BJ (cell line): ENCODE measurements at regions of chr1 and their contacts with region 1.

Region 1: DNA sequence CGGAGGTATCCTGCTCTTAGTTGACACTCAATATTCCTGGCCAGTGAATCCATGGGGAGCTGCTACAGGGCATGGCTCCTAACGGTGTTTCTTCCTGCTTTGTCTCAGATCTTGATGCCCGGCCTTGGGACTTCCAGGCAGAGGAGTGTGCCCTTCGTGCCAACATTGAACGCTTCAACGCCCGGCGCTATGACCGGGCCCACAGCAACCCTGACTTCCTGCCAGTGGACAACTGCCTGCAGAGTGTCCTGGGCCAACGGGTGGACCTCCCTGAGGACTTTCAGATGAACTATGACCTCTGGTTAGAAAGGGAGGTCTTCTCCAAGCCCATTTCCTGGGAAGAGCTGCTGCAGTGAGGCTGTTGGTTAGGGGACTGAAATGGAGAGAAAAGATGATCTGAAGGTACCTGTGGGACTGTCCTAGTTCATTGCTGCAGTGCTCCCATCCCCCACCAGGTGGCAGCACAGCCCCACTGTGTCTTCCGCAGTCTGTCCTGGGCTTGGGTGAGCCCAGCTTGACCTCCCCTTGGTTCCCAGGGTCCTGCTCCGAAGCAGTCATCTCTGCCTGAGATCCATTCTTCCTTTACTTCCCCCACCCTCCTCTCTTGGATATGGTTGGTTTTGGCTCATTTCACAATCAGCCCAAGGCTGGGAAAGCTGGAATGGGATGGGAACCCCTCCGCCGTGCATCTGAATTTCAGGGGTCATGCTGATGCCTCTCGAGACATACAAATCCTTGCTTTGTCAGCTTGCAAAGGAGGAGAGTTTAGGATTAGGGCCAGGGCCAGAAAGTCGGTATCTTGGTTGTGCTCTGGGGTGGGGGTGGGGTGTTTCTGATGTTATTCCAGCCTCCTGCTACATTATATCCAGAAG is 16.7 kb downstream of the ALX3 start:
- DNase-seq: no peak
- H3K4me3 ChIP-seq: no peak overlapping the region
- H3K27me3 ChIP-seq: no peaks in the 10 kb centered on the region
- CTCF ChIP-seq: peak; percentile 97

Region 2: DNA sequence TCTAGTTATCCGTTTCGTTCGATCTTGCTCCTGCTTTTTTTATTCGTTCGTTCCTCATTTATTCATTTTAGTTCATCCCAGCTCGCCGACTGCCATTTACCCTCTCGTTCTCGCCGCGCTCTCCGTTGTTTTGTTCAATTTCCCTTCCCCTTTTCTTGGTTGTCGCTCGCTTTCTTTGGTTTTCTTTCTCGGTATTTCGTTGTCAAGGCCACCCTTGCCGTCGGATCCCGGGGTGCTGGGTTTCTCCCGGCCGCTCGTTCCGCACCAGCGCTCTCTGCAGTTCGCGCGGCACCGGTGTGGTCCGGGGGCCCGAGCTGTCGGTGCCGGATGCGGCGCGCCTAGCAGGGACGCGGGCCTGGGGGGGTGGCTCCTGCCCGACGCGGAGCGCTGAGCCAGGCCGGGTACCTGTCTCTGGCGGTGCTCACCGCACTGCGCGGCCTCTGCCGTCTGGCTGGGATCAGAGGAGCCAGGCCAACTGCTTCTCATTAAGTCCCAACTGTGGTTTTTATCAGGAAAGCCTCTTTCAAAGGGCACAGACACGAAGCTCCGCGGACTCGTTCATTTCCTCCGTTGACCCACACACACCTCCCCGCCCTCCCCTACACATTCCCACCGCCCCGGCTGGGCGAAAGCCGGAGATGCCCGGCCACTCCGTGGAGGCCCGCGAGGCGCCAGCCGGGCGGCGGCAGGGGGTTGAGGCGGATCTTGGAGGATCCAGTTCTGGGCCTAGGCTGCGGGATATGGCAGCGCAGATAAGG is 15.0 kb after region 1 on chr1:
- CTCF ChIA-PET with region 1: interaction called, 48 read pairs
- POLR2A ChIA-PET with region 1: no interaction called
- DNase-seq: no peak
- H3K4me3 ChIP-seq: peak overlapping the region; percentile 43
- H3K27me3 ChIP-seq: peaks cover 25% of the 10 kb centered on the region
- CTCF ChIP-seq: no peak

Region 3: DNA sequence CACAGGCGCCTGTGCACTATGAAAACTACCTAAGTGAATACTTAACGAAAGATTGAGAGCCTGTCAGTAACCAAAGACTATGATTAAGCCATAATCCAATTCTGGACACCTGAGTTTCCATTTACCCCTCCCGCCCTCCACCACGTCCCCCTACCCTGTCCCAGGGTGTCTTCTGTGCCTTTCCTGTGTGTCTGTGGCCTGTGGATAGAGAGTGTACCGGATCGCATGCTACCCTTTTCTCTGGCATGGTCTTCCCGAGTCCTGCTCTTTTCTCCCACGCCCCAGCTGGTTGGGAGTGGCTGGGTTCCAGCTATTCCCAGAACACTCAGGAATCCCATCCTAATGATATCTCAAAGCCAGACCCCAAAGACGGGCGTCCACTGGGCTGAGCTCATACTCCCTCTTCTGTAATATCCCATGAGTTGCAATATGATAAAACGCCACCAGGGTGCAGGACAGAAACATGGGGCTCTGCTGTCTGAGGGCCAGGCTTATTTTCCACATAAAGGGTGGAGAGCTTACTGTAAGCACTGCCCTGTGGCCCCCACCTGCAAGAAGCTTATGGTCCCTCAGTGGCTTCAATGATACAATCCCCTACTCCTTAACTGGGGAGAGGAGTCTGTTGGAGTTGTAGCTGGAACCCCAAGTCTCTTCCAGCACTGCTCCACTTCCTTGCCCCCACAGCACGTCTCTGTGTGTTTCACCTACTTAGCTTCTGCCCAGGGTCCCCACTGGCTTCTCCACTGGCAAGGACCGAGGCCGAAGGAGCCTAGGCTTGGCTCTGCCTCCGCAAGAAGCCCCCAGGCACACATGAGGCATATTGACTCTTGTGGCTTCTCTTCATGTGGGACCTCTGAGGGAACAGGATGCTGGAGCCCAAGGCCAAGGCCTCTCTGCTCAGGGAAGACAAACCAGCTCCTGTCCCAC is 34.3 kb after region 1 on chr1:
- CTCF ChIA-PET with region 1: interaction called, 100 read pairs
- POLR2A ChIA-PET with region 1: no interaction called
- DNase-seq: no peak
- H3K4me3 ChIP-seq: no peak overlapping the region
- H3K27me3 ChIP-seq: peaks cover 2% of the 10 kb centered on the region
- CTCF ChIP-seq: peak; percentile 76

Region 4: GRCh38 chr1:110112656-110113055 is 58.9 kb after region 1 on chr1:
- CTCF ChIA-PET with region 1: interaction called, 345 read pairs
- POLR2A ChIA-PET with region 1: no interaction called
- DNase-seq: no peak
- H3K4me3 ChIP-seq: no peak overlapping the region
- H3K27me3 ChIP-seq: peaks cover 4% of the 10 kb centered on the region; the same call in 1 of the 2 replicates
- CTCF ChIP-seq: no peak

Region 5: GRCh38 chr1:110203021-110203661 is 149.3 kb after region 1 on chr1:
- CTCF ChIA-PET with region 1: interaction called, 10 read pairs
- POLR2A ChIA-PET with region 1: no interaction called
- DNase-seq: no peak
- H3K4me3 ChIP-seq: no peak overlapping the region
- H3K27me3 ChIP-seq: no peaks in the 10 kb centered on the region
- CTCF ChIP-seq: peak; percentile 79